ENCODE measurements at regions of chr6 and their contacts with region 1.

Region 1: GRCh38 chr6:140017470-140017869 is 643.0 kb upstream of the CITED2 start:
- DNase-seq: no peak
- H3K4me3 ChIP-seq: no peak overlapping the region
- H3K27ac ChIP-seq: no peak overlapping the region
- H3K4me1 ChIP-seq: no peaks in the 10 kb centered on the region
- H3K27me3 ChIP-seq: no peaks in the 10 kb centered on the region
- CTCF ChIP-seq: no peak
- EP300 ChIP-seq: no peak
- POLR2A ChIP-seq: no peak

Region 2: GRCh38 chr6:139982652-139983295 is 34.7 kb before region 1 on chr6:
- intact Hi-C with region 1: loop called in 1 of 4 experiments (anchors 1 kb)
- DNase-seq: no peak
- H3K4me3 ChIP-seq: no peak overlapping the region
- H3K27ac ChIP-seq: peak overlapping the region in 1 of 2 donors; percentile 30
- H3K4me1 ChIP-seq: peaks cover 12% of the 10 kb centered on the region
- H3K27me3 ChIP-seq: no peaks in the 10 kb centered on the region
- CTCF ChIP-seq: no peak
- EP300 ChIP-seq: no peak
- POLR2A ChIP-seq: no peak